ENCODE measurements at regions of chr1 and their contacts with region 1.

Region 1: DNA sequence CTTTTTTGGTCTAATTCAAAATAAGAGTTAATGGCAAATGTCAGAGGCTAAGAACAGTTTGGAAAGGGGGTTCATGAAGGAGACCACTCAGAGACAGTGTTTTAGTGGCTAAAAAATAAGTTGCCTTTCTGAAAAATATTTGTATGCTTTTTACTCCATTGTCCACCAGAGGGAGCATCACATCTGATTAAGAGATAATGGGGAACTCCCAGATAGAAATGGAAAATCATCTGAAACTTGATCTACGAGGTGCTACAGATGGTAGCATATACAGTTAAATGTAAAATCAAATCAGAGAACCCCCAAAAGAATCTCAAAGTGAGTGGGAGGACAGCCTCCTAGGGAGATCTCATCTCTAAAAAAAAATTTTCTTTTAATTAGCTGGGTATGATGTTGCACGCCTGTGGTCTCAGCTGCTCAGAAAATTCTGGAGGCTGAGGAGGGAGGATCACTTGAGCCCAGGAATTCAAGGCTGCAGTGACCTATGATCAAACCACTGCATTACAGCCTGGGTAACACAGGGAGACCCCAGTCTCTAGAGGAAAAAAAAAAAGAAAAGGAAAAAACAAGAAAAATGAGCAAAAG is 9.7 kb downstream of the SMYD3 start:
- DNase-seq: peak; percentile 91
- H3K4me3 Mint-ChIP-seq: no peak overlapping the region
- H3K27ac Mint-ChIP-seq: no peak overlapping the region
- H3K4me1 Mint-ChIP-seq: peaks cover 7% of the 10 kb centered on the region
- H3K27me3 Mint-ChIP-seq: no peaks in the 10 kb centered on the region
- CTCF ChIP-seq: peak; percentile 86

Region 2: GRCh38 chr1:245079021-245079609 is 1418.3 kb before region 1 on chr1:
- CTCF ChIA-PET with region 1: interaction called, 3 read pairs
- POLR2A ChIA-PET with region 1: no interaction called
- intact Hi-C with region 1: loop called (anchors 2 kb)
- DNase-seq: peak; percentile 73
- H3K4me3 Mint-ChIP-seq: no peak overlapping the region
- H3K27ac Mint-ChIP-seq: no peak overlapping the region
- H3K4me1 Mint-ChIP-seq: peaks cover 4% of the 10 kb centered on the region
- H3K27me3 Mint-ChIP-seq: no peaks in the 10 kb centered on the region
- CTCF ChIP-seq: peak; percentile 97

Region 3: DNA sequence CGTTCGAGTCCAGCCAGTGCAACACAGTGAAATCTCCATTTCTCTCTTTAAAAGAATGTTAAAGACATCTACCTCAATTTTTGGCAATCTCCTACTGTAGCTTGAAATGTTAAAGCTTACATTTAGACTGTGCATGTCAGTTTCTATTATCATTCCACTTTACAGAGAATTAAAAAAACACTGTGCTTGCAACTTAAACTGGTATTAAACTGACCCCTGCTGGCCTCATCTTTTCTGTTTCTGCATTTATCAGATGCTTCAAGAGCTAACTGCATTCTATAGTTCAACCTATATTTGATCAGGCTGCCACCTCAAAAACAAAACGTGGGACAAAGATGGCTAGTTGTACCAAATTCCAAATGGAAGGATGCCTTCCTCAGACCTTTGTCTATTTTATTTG is 216.9 kb before region 1 on chr1:
- CTCF ChIA-PET with region 1: interaction called, 10 read pairs
- POLR2A ChIA-PET with region 1: no interaction called
- intact Hi-C with region 1: loop called (anchors 5 kb)
- DNase-seq: peak; percentile 47
- H3K4me3 Mint-ChIP-seq: no peak overlapping the region
- H3K27ac Mint-ChIP-seq: no peak overlapping the region
- H3K4me1 Mint-ChIP-seq: no peaks in the 10 kb centered on the region
- H3K27me3 Mint-ChIP-seq: no peaks in the 10 kb centered on the region
- CTCF ChIP-seq: peak; percentile 43

Region 4: DNA sequence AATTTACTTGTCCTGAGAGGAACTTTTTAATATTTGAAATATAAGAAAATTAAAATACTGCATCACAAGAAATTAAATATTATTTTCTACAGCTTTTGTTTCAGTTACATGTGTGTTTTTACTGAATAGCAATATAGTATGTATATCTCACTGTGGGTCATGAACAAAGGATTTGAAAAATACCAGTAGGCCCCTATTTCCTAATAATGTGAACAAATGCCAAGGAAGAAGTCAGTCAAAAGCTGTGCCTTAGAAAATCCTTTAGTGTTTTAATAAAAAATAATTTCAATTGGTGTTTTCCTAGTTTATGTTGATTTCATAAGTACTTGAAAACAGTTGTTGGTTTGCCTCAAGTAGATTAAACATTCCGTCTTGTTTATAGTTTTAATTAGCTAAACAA is 37.0 kb before region 1 on chr1:
- CTCF ChIA-PET with region 1: interaction called, 29 read pairs
- POLR2A ChIA-PET with region 1: interaction called, 4 read pairs
- intact Hi-C with region 1: no loop called
- DNase-seq: no peak
- H3K4me3 Mint-ChIP-seq: no peak overlapping the region
- H3K27ac Mint-ChIP-seq: no peak overlapping the region
- H3K4me1 Mint-ChIP-seq: peaks cover 13% of the 10 kb centered on the region
- H3K27me3 Mint-ChIP-seq: no peaks in the 10 kb centered on the region
- CTCF ChIP-seq: no peak

Region 5: GRCh38 chr1:246527402-246528088 is 30.1 kb after region 1 on chr1:
- CTCF ChIA-PET with region 1: interaction called, 4 read pairs
- POLR2A ChIA-PET with region 1: no interaction called
- intact Hi-C with region 1: loop called (anchors 2 kb)
- DNase-seq: no peak
- H3K4me3 Mint-ChIP-seq: no peak overlapping the region
- H3K27ac Mint-ChIP-seq: no peak overlapping the region
- H3K4me1 Mint-ChIP-seq: peaks cover 17% of the 10 kb centered on the region
- H3K27me3 Mint-ChIP-seq: no peaks in the 10 kb centered on the region
- CTCF ChIP-seq: no peak

Region 6: GRCh38 chr1:246608616-246609376 is 111.4 kb after region 1 on chr1:
- CTCF ChIA-PET with region 1: interaction called, 4 read pairs
- POLR2A ChIA-PET with region 1: no interaction called
- intact Hi-C with region 1: loop called (anchors 2 kb)
- DNase-seq: peak; percentile 99
- H3K4me3 Mint-ChIP-seq: peak overlapping the region; percentile 66
- H3K27ac Mint-ChIP-seq: peak overlapping the region; percentile 95
- H3K4me1 Mint-ChIP-seq: peaks cover 39% of the 10 kb centered on the region
- H3K27me3 Mint-ChIP-seq: no peaks in the 10 kb centered on the region
- CTCF ChIP-seq: no peak

Region 7: GRCh38 chr1:246753670-246754535 is 256.5 kb after region 1 on chr1:
- CTCF ChIA-PET with region 1: interaction called, 116 read pairs
- POLR2A ChIA-PET with region 1: no interaction called
- intact Hi-C with region 1: loop called (anchors 1 kb)
- DNase-seq: peak; percentile 85
- H3K4me3 Mint-ChIP-seq: no peak overlapping the region
- H3K27ac Mint-ChIP-seq: no peak overlapping the region
- H3K4me1 Mint-ChIP-seq: peaks cover 10% of the 10 kb centered on the region
- H3K27me3 Mint-ChIP-seq: no peaks in the 10 kb centered on the region
- CTCF ChIP-seq: peak; percentile 98

Region 8: DNA sequence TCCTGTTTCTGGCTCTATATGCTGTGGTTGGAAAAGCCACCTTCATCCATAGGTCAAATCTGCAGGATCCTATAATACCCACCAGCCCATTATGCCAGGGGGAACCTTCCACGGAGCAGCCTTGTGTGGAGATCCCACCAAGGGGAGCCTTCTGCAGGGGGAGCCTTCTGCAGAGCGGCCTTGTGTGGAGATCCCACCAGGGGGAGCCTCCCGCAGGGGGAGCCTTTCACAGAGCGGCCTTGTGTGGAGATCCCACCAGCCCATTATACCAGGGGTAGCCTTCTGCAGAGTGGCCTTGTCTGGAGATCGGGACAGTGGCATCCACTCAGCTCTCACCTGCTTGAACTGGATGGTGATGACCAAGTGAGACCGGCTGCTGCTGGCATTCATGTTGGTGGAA is 312.1 kb after region 1 on chr1:
- CTCF ChIA-PET with region 1: no interaction called
- POLR2A ChIA-PET with region 1: no interaction called
- intact Hi-C with region 1: no loop called
- DNase-seq: no peak
- H3K4me3 Mint-ChIP-seq: no peak overlapping the region
- H3K27ac Mint-ChIP-seq: no peak overlapping the region
- H3K4me1 Mint-ChIP-seq: no peaks in the 10 kb centered on the region
- H3K27me3 Mint-ChIP-seq: peaks cover 15% of the 10 kb centered on the region
- CTCF ChIP-seq: no peak